CD14-positive monocyte (primary cell): ENCODE measurements at regions of chr1 and their contacts with region 1.

Region 1: DNA sequence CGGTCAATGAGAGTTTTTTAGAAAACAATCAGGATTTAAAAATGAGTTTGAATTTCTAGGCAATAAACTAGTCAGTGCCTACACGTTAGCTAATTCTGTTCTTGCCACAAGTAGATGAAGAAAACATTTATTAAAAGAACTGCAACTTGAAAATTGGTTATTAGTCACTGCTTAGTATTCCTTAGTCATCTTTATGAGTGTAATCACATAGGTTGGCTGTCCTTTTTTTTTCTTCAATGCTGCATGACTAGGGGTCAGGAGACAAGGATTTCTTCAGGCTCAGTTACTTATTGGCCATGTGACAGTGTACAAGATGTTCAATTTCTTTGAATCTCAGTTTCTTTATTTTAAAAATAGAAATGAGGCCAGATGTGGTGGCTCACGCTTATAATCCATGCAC is 17.1 kb downstream of the SOAT1 start:
- DNase-seq: peak; percentile 59 to 87 (median 72)
- H3K4me3 ChIP-seq: no peak overlapping the region
- H3K4me3 Mint-ChIP-seq: no peak overlapping the region
- H3K27ac ChIP-seq: peak overlapping the region in 1 of 2 donors; percentile 79
- H3K27ac Mint-ChIP-seq: peak overlapping the region; percentile 64 to 89 (median 84)
- H3K4me1 ChIP-seq: peaks cover 13 to 16% of the 10 kb centered on the region in 2 donors
- H3K4me1 Mint-ChIP-seq: peaks cover 20% of the 10 kb centered on the region
- H3K27me3 ChIP-seq: no peaks in the 10 kb centered on the region
- H3K27me3 Mint-ChIP-seq: peaks cover 0 to 1% (median 0%) of the 10 kb centered on the region in 3 donors
- CTCF ChIP-seq: no peak

Region 2: GRCh38 chr1:179241523-179242097 is 69.1 kb before region 1 on chr1:
- intact Hi-C with region 1: no loop called
- DNase-seq: no peak
- H3K4me3 ChIP-seq: no peak overlapping the region
- H3K4me3 Mint-ChIP-seq: no peak overlapping the region
- H3K27ac ChIP-seq: no peak overlapping the region
- H3K27ac Mint-ChIP-seq: no peak overlapping the region
- H3K4me1 ChIP-seq: no peaks in the 10 kb centered on the region
- H3K4me1 Mint-ChIP-seq: no peaks in the 10 kb centered on the region
- H3K27me3 ChIP-seq: no peaks in the 10 kb centered on the region
- H3K27me3 Mint-ChIP-seq: peaks cover 0 to 2% (median 0%) of the 10 kb centered on the region in 3 donors
- CTCF ChIP-seq: no peak

Region 3: DNA sequence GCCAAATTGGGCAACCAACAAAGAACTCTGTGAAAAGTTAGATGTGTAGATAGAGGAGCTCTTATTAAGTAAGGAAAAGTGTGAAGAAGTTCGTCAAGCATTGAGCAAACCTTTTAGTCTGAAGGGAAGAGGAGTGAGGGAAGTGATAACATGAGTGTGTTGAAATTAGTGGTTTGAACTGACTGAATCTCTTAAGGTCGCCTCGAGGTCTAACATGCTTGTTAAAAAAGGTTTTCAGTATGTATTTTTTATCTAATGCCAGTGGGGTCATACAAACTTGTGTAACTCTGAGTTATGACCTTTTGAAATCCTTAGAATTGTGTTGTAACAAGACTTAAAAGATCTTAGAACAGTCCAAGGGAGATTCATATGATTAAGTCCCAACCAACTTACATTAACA is 17.0 kb after region 1 on chr1:
- intact Hi-C with region 1: loop called in 1 of 2 experiments (anchors 2 kb)
- DNase-seq: peak; percentile 85 to 95 (median 89)
- H3K4me3 ChIP-seq: peak overlapping the region in 1 of 3 experiments; percentile 64
- H3K4me3 Mint-ChIP-seq: peak overlapping the region in 1 of 2 donors; percentile 33
- H3K27ac ChIP-seq: peak overlapping the region; percentile 51 to 82
- H3K27ac Mint-ChIP-seq: peak overlapping the region; percentile 92 to 95 (median 93)
- H3K4me1 ChIP-seq: peaks cover 57 to 61% of the 10 kb centered on the region in 2 donors
- H3K4me1 Mint-ChIP-seq: peaks cover 71% of the 10 kb centered on the region
- H3K27me3 ChIP-seq: no peaks in the 10 kb centered on the region
- H3K27me3 Mint-ChIP-seq: no peaks in the 10 kb centered on the region
- CTCF ChIP-seq: no peak

Region 4: DNA sequence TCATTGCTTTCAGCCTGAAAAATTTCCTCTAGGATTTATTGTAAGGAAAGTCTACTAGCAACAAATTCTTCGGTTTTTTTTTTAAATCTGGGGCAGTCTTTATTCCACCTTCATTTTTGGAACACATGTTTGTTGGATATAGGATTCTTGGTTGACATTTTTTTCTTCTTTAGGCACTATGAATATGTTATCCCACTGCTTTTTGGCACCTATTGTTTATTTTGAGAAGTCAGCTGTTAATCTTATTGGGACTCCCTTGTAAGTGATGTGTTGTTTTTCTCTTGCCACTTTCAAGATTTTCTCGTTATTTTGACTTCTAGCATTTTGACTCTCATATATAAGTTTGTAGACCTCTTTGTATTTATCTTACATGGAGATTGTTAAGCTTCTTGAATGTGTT is 165.8 kb after region 1 on chr1:
- intact Hi-C with region 1: no loop called
- DNase-seq: no peak
- H3K4me3 ChIP-seq: no peak overlapping the region
- H3K4me3 Mint-ChIP-seq: no peak overlapping the region
- H3K27ac ChIP-seq: no peak overlapping the region
- H3K27ac Mint-ChIP-seq: no peak overlapping the region
- H3K4me1 ChIP-seq: no peaks in the 10 kb centered on the region
- H3K4me1 Mint-ChIP-seq: no peaks in the 10 kb centered on the region
- H3K27me3 ChIP-seq: no peaks in the 10 kb centered on the region
- H3K27me3 Mint-ChIP-seq: peaks cover 0 to 2% (median 0%) of the 10 kb centered on the region in 3 donors
- CTCF ChIP-seq: no peak